Psoas muscle (tissue), 8 donors: ENCODE measurements at regions of chr1 and their contacts with region 1.

Region 1: GRCh38 chr1:200488375-200489165 is 78.7 kb upstream of the ZNF281 start:
- DNase-seq: no peak
- ATAC-seq: peak; percentile 63 to 81 (median 66)
- H3K4me3 ChIP-seq: peak overlapping the region; percentile 22
- H3K27ac ChIP-seq: no peak overlapping the region
- H3K4me1 ChIP-seq: peaks cover 4% of the 10 kb centered on the region
- H3K27me3 ChIP-seq: peaks cover 0 to 2% (median 1%) of the 10 kb centered on the region in 3 donors
- CTCF ChIP-seq: peak; percentile 79

Region 2: GRCh38 chr1:198763298-198763714 is 1725.3 kb before region 1 on chr1:
- intact Hi-C with region 1: loop called in 1 of 2 experiments (anchors 10 kb)
- DNase-seq: no peak
- ATAC-seq: no peak
- H3K4me3 ChIP-seq: no peak overlapping the region
- H3K27ac ChIP-seq: no peak overlapping the region
- H3K4me1 ChIP-seq: no peaks in the 10 kb centered on the region
- H3K27me3 ChIP-seq: no peaks in the 10 kb centered on the region
- CTCF ChIP-seq: no peak

Region 3: GRCh38 chr1:199684686-199685273 is 803.8 kb before region 1 on chr1:
- intact Hi-C with region 1: loop called (anchors 2 to 5 kb)
- DNase-seq: no peak
- ATAC-seq: peak; percentile 49 to 74 (median 62)
- H3K4me3 ChIP-seq: no peak overlapping the region
- H3K27ac ChIP-seq: no peak overlapping the region
- H3K4me1 ChIP-seq: no peaks in the 10 kb centered on the region
- H3K27me3 ChIP-seq: no peaks in the 10 kb centered on the region
- CTCF ChIP-seq: peak; percentile 82

Region 4: DNA sequence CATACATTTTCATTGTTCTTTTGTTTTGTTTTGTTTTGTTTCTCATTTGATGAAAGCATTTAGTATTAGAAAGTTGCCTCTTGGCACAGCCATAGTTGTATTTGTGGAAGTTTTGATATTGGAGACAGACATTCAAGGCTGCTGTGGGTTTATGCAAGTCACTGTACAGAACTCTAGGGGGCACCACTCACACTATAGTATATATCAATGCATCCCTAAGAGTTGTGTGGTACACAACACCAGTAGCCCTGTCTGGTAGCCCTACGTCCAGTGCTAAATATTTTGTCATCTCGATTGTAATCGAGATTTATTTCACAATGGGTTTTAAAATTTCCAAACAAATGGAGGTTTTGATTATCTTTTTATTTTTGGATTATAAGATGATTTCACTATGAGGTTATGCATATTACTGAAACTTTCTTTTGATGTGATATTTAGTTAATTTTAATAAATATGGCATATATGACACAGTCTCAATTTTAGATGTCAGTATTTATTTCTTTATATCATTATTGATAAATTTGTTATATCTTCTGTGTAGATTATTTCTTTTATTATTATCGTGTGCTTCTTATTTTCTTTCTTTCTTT is 348.8 kb before region 1 on chr1:
- intact Hi-C with region 1: loop called in 1 of 2 experiments (anchors 10 kb)
- DNase-seq: no peak
- ATAC-seq: peak; percentile 67 to 80 (median 70)
- H3K4me3 ChIP-seq: no peak overlapping the region
- H3K27ac ChIP-seq: no peak overlapping the region
- H3K4me1 ChIP-seq: no peaks in the 10 kb centered on the region
- H3K27me3 ChIP-seq: no peaks in the 10 kb centered on the region
- CTCF ChIP-seq: peak; percentile 49

Region 5: DNA sequence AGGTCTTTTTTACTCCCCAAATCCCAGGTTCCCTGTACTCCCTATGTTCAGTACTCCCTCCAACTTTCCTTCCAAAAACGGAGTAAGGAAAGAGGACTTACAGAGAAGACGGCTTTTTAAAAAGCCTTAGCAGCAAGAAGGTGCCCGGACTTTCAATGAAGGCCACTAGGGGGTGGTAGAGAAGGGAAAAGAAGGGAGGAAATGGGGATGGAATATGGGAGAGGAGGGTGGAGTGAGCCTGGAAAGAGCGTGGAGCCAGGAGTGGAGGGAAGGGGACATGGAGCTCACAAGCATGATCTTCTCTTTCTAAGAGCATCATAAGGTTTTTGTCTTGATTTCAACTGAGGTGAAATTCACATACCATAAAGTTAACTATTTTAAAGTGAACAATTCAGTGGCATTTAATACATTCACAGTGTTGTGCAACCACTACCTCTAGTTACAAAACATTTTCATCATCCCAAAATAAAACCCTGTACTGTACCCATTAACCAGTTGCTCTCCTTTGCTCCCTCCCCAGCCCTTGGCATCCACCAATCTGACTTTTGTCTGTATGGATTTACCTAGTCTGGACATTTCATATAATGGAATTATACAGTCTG is 208.7 kb before region 1 on chr1:
- intact Hi-C with region 1: loop called in 1 of 2 experiments (anchors 10 kb)
- DNase-seq: no peak
- ATAC-seq: no peak
- H3K4me3 ChIP-seq: no peak overlapping the region
- H3K27ac ChIP-seq: no peak overlapping the region
- H3K4me1 ChIP-seq: no peaks in the 10 kb centered on the region
- H3K27me3 ChIP-seq: peaks cover 0 to 2% (median 0%) of the 10 kb centered on the region in 3 donors
- CTCF ChIP-seq: peak; percentile 46

Region 6: GRCh38 chr1:200302192-200302920 is 186.2 kb before region 1 on chr1:
- intact Hi-C with region 1: loop called (anchors 10 kb)
- DNase-seq: no peak
- ATAC-seq: peak in 3 of 4 donors; percentile 8 to 41 (median 26)
- H3K4me3 ChIP-seq: peak overlapping the region; percentile 75
- H3K27ac ChIP-seq: no peak overlapping the region
- H3K4me1 ChIP-seq: no peaks in the 10 kb centered on the region
- H3K27me3 ChIP-seq: peaks cover 0 to 18% (median 2%) of the 10 kb centered on the region in 3 donors
- CTCF ChIP-seq: no peak

Region 7: DNA sequence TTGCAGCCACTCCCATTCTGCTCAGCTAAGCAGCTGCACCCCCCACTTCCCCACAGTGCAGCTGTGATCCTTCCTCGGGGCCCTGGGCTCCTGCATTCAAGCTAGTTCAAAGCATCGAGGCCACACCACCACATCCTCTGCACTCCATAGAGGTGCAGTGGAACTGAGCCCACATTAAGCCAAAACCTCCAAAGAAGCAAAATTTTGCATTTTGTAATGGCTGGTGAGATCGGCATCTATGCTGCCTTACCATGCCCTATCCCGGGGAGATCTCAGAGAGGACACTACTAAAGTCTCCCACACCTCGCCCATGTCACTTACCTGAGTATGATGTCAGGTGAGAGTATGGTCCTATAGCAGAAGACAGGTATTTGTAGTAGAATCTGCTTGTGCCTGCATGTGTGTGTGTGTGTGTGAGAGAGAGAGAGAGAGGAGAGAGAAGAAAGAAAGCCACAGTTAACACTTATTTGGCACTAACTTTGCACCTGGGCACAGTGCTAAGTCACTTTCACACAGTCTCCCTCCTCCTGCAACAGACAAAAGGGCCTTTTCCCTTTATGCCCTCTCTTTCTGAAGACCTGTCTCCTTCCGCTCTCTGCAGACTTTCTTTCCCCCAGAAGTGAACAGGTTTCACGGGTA is 42.2 kb after region 1 on chr1:
- intact Hi-C with region 1: no loop called
- DNase-seq: no peak
- ATAC-seq: no peak
- H3K4me3 ChIP-seq: no peak overlapping the region
- H3K27ac ChIP-seq: no peak overlapping the region
- H3K4me1 ChIP-seq: no peaks in the 10 kb centered on the region
- H3K27me3 ChIP-seq: peaks cover 0 to 3% (median 0%) of the 10 kb centered on the region in 3 donors
- CTCF ChIP-seq: no peak